ENCODE measurements at regions of chr10 and their contacts with region 1.

Region 1: DNA sequence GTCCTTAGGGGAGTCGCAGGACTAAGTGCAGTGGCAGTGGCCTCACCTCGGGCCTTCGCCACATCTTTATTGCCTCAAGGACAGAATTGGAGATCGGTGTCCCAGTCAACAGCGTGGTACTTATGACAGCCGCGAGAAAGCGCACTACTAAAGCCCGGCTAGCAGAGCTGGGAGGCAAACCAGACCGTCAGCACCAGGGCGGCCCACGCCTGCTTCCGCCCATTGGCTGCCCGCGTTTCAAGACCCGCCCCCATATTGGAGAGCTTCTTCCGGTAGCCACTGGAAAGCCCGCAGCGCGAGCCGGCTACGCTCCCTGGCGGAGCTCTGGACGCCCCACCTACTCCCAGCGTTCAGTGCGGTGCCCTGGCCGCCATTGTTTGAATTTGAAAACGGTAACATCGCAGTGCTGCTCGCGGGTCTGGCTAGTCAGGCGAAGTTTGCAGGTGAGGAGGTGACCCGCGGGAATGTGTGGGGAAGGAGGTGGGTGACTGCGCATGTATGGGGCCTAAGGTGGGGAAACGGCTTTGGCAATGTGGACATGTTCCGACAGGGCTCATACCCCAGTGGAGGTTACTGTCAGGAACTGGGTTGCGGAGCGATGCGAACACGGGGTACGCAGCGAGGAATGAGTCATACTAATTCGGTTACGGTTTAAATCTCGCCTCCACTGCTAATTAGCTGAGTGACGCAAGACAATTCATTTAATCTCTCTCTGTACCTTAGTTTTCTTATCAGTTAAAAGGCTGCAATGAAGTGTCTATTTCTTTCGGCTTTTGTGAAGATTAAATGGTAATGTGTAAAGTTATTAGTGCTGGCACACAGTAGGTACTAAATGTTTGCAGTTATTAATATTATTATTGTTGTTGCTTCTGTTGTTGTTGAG is at the start of gene KIF20B:
- DNase-seq: peak; percentile 91 to 92
- H3K4me3 ChIP-seq: peak within 1 kb of the TSS; percentile 89 to 100 (median 100)
- H3K27ac ChIP-seq: peak within 1 kb of the TSS; percentile 87
- H3K4me1 ChIP-seq: peaks cover 0 to 4% (median under 1%) of the 10 kb centered on the region in 4 experiments; a peak in 2 of 7 replicates
- H3K27me3 ChIP-seq: no peaks in the 10 kb centered on the region
- CTCF ChIP-seq: peak in 1 of 3 experiments; percentile 22; a peak in 1 of 4 replicates
- EP300 ChIP-seq: peak in 1 of 2 experiments; percentile 37; a peak in 1 of 3 replicates
- POLR2A ChIP-seq: peak; percentile 69 to 95
- RAD21 ChIP-seq: peak; percentile 41 to 56
- total RNA-seq, gene KIF20B: 70.8 and 72.0 TPM in 2 replicates

Region 2: GRCh38 chr10:89684604-89685003 is 16.9 kb before region 1 on chr10:
- CTCF ChIA-PET with region 1: no interaction called
- POLR2A ChIA-PET with region 1: interaction called, 13 read pairs
- DNase-seq: no peak
- H3K4me3 ChIP-seq: no peak overlapping the region
- H3K27ac ChIP-seq: no peak overlapping the region
- H3K4me1 ChIP-seq: no peaks in the 10 kb centered on the region
- H3K27me3 ChIP-seq: no peaks in the 10 kb centered on the region
- CTCF ChIP-seq: no peak
- EP300 ChIP-seq: no peak
- POLR2A ChIP-seq: no peak
- RAD21 ChIP-seq: no peak

Region 3: GRCh38 chr10:89963451-89964102 is 262.1 kb after region 1 on chr10:
- CTCF ChIA-PET with region 1: no interaction called
- POLR2A ChIA-PET with region 1: no interaction called
- DNase-seq: no peak
- H3K4me3 ChIP-seq: no peak overlapping the region
- H3K27ac ChIP-seq: no peak overlapping the region
- H3K4me1 ChIP-seq: no peaks in the 10 kb centered on the region
- H3K27me3 ChIP-seq: no peaks in the 10 kb centered on the region
- CTCF ChIP-seq: no peak
- EP300 ChIP-seq: no peak
- POLR2A ChIP-seq: no peak
- RAD21 ChIP-seq: no peak

Measured in H1 (cell line).